Activated naive CD4-positive, alpha-beta T cell treated with anti-CD3 and anti-CD28 coated beads for 36 hours (primary cell): ENCODE measurements at regions of chr19 and their contacts with region 1.

Region 1: GRCh38 chr19:34639491-34640085 is 37.4 kb downstream of the SCGB2B2 start:
- DNase-seq: peak; percentile 78
- H3K4me3 Mint-ChIP-seq: no peak overlapping the region
- H3K27ac Mint-ChIP-seq: no peak overlapping the region
- H3K4me1 Mint-ChIP-seq: no peaks in the 10 kb centered on the region
- H3K27me3 Mint-ChIP-seq: no peaks in the 10 kb centered on the region

Region 2: GRCh38 chr19:34448191-34448590 is 191.4 kb before region 1 on chr19:
- CTCF ChIA-PET with region 1: no interaction called
- intact Hi-C with region 1: no loop called
- DNase-seq: no peak
- H3K4me3 Mint-ChIP-seq: no peak overlapping the region
- H3K27ac Mint-ChIP-seq: peak overlapping the region; percentile 33
- H3K4me1 Mint-ChIP-seq: peaks cover 1% of the 10 kb centered on the region
- H3K27me3 Mint-ChIP-seq: no peaks in the 10 kb centered on the region

Region 3: DNA sequence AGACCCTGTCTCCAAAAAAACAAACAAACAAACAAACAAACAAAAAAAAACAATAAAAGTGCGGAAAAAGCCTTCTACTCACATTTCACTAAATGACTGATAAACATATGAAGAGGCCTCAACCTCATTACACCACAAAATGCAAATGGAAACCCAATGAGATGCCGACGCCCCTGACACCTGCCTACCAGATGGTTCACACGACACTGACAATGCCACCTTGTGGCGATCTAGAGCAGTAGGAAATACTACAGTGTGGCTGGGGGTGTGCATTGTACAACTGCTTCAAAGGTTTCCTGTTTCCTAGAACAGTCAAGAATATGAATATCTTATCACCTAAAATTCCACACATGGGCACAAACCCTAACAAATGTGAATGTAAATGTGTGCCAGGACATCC is 23.3 kb after region 1 on chr19:
- CTCF ChIA-PET with region 1: interaction called, 17 read pairs
- intact Hi-C with region 1: loop called (anchors 1 kb)
- DNase-seq: peak; percentile 62
- H3K4me3 Mint-ChIP-seq: no peak overlapping the region
- H3K27ac Mint-ChIP-seq: no peak overlapping the region
- H3K4me1 Mint-ChIP-seq: peaks cover 22% of the 10 kb centered on the region
- H3K27me3 Mint-ChIP-seq: peaks cover under 1% of the 10 kb centered on the region

Region 4: GRCh38 chr19:34712395-34713261 is 73.0 kb after region 1 on chr19:
- CTCF ChIA-PET with region 1: interaction called, 67 read pairs
- intact Hi-C with region 1: loop called (anchors 1 kb)
- DNase-seq: peak; percentile 74
- H3K4me3 Mint-ChIP-seq: no peak overlapping the region
- H3K27ac Mint-ChIP-seq: no peak overlapping the region
- H3K4me1 Mint-ChIP-seq: no peaks in the 10 kb centered on the region
- H3K27me3 Mint-ChIP-seq: peaks cover 11% of the 10 kb centered on the region

Region 5: DNA sequence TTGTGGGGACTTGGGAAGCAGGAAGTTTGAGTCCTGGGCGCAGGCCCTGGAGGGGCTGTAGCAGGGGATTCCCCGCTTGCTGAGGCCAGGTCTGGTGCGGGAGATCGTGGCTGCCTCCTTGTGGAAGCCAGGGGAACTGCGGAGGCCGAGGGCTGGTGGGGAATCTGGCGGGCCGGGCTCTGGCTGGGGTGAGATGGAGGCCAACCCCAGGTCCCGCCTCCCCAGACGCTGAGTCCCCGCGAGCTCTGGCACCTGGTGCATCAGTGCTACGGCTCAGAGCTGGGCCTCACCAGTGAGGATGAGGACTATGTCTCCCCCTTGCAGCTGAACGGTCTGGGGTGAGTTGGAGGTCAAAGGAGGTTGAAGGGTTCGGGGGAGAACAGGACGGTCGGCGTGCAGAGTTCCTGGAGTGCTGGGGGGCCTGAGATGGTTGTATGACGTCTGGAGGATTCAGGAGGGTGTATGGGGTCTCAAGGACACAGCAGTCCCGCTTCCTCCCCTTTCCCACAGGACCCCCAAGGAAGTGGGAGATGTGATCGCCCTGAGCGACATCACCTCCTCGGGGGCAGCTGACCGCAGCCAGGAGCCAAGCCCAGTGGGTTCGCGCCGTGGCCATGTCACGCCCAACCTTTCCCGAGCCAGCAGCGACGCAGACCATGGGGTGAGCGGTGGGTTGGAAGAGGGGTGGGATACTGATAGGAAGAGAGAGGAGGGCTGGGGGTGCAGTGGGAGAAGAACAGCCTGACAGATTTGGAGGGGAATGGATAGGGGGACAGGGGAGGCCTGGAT is 373.6 kb after region 1 on chr19:
- CTCF ChIA-PET with region 1: no interaction called
- intact Hi-C with region 1: loop called (anchors 5 kb)
- DNase-seq: peak; percentile 87
- H3K4me3 Mint-ChIP-seq: peak overlapping the region; percentile 60
- H3K27ac Mint-ChIP-seq: peak overlapping the region; percentile 90
- H3K4me1 Mint-ChIP-seq: peaks cover 57% of the 10 kb centered on the region
- H3K27me3 Mint-ChIP-seq: no peaks in the 10 kb centered on the region

Region 6: DNA sequence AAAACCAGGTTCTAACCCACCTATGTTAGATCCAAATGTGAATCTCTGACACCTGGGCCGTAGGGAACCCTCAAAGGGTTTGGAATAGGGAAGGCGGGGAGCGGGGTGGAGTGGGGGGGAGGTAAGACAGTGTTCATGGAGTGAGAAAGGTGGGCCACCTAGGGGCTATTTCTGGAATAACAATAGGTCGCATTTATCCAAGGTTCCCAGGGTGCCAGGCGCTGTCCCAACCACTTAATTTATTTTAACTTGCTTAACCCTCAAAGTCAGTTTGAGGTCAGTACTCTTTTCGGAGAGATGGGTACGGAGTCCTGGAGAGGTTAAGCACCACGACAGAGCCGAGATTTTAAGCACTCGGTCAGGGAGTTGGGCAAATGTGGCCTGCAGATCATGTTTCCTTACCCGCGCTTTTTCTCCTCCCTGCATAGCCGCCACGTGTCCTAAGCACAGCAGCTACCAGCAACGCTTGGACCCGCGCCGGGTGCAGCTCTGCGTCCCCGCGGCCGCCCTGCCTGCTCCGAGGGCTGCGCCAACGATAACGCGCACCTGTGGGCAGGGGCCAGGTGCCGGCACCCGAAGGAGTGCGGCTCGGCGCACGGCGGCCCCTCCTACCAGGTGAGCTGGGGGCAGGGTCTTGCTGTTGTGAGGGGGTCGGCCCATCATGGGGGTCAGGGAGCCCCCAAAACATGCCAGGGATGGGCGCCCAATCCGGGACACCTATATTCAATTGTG is 451.1 kb after region 1 on chr19:
- CTCF ChIA-PET with region 1: no interaction called
- intact Hi-C with region 1: loop called (anchors 1 kb)
- DNase-seq: peak; percentile 64
- H3K4me3 Mint-ChIP-seq: no peak overlapping the region
- H3K27ac Mint-ChIP-seq: no peak overlapping the region
- H3K4me1 Mint-ChIP-seq: peaks cover 1% of the 10 kb centered on the region
- H3K27me3 Mint-ChIP-seq: peaks cover 5% of the 10 kb centered on the region